ENCODE measurements at regions of chr5 and their contacts with region 1.

Region 1: DNA sequence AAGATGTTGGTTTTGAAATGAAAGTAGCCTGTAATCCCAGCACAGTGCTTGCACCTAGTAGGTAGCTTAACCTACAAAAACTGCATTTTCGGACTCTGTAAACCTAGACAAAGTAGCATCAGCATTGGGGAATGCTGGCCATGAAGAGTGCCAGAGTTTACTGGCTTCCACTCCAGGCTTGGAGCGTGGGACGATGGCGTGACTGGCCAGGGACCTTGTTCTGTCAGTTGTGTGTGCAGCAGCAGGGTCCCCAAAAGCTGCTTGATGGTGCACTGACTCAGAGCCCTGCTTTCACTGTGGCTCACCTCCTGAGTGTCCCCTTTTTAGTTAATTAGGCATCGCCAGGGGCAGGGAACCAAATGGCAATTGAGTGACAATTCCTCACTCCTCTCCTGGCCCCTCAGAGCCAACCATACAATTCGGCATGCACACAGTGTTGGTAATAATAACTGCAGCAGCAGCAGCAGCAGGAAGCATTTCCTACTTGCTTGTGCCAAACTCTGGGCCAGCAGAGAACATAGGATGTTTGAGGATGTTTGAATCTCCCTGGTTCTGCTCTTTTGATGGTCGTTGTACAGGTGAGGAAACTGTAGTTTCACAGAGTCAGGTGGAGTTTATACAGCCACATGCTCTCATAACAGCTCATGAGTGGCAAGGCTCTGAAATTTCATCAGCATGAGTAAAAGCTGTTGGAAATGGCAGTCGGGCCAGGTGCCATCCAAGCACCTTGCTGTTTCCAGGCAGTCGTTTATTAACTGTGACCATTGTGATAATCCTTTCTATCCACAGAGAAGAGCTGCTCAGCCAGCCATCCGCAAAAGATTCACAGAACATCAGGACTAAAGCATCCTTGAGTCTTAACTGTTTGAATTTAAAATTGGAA is 4.2 kb downstream of the UBE2QL1 start:
- DNase-seq: no peak
- ATAC-seq: no peak
- H3K4me3 ChIP-seq: peak overlapping the region in 1 of 2 donors; percentile 16
- H3K27ac ChIP-seq: peak overlapping the region in 1 of 2 donors; percentile 32
- H3K4me1 ChIP-seq: no peaks in the 10 kb centered on the region
- H3K27me3 ChIP-seq: no peaks in the 10 kb centered on the region

Region 2: GRCh38 chr5:6551287-6551954 is 98.6 kb after region 1 on chr5:
- intact Hi-C with region 1: loop called (anchors 5 to 10 kb)
- DNase-seq: peak; percentile 85 to 87
- ATAC-seq: peak; percentile 63
- H3K4me3 ChIP-seq: no peak overlapping the region
- H3K27ac ChIP-seq: peak overlapping the region; percentile 2 to 28
- H3K4me1 ChIP-seq: no peaks in the 10 kb centered on the region
- H3K27me3 ChIP-seq: no peaks in the 10 kb centered on the region

Region 3: DNA sequence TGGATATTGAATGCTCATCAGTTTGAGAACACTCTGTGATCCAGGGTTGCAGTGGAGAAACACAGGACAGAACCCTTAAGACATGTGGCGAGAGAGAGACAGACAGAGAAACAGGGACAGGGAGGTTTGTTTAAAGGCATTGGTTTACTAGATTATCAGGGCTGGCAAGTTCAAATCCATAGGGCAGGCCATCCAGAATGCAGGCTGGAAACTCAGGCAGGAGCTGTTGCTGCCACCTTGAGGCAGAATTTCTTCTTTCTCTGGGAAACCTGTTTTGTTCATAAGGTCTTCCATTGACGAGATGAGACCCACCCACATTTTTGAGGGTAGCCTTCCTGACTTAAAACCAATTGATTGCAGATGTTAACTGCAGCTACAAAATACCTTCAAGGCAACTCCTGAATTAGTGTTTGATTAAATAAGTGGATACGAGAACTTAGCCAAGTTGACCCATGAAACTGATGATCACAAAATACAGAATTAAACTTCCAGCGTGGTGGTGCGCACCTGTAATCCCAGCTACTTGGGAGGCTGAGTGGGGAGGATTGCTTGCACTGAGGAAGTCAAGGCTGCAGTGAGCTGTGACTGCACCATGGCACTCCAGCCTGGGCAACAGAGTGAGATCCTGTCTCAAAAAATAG is 124.1 kb after region 1 on chr5:
- intact Hi-C with region 1: loop called in 1 of 2 experiments (anchors 5 kb)
- DNase-seq: no peak
- ATAC-seq: peak; percentile 15
- H3K4me3 ChIP-seq: no peak overlapping the region
- H3K27ac ChIP-seq: no peak overlapping the region
- H3K4me1 ChIP-seq: no peaks in the 10 kb centered on the region
- H3K27me3 ChIP-seq: no peaks in the 10 kb centered on the region

Region 4: DNA sequence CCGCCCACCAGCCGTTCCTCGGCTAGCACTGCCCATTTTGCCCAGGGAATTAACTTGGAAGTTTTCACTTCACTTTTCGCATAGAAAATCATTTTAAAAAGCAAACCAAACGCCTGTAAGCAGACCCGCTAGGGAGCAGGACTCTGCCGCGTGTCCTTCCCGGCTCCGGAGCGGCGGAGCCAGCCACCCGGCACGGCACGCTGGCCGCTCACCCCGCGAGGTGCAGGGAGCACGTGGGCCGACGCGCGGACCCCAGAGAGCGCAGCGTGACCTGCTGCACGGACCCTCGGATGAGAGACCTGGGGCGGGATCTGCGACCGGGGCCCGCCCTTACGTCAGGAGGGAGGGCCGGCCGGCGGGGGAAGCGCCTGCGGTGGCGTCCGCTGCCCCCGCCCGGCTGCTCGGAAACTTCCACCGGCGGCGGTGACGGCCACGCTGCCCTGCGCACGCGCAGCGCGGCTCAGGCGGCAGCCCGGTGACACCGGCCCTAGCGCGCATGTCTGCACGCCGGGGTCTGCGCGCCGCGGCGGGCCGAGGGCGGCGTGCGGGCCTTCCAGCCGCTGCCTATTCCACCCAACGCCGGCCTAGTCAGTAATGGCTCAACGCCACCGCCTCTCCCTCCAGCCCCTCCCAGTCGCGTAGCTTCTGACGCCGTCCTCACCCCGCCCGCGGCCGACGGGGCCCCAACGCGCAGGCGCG is 259.9 kb after region 1 on chr5:
- intact Hi-C with region 1: loop called in 1 of 2 experiments (anchors 10 kb)
- DNase-seq: peak; percentile 98 to 99
- ATAC-seq: peak; percentile 95
- H3K4me3 ChIP-seq: peak overlapping the region; percentile 56 to 62
- H3K27ac ChIP-seq: peak overlapping the region; percentile 51 to 81
- H3K4me1 ChIP-seq: peaks cover 4 to 7% of the 10 kb centered on the region in 2 donors
- H3K27me3 ChIP-seq: no peaks in the 10 kb centered on the region

Measured in aorta (tissue), 5 donors.